Endothelial cell of umbilical vein (primary cell): ENCODE measurements at regions of chr6 and their contacts with region 1.

Region 1: DNA sequence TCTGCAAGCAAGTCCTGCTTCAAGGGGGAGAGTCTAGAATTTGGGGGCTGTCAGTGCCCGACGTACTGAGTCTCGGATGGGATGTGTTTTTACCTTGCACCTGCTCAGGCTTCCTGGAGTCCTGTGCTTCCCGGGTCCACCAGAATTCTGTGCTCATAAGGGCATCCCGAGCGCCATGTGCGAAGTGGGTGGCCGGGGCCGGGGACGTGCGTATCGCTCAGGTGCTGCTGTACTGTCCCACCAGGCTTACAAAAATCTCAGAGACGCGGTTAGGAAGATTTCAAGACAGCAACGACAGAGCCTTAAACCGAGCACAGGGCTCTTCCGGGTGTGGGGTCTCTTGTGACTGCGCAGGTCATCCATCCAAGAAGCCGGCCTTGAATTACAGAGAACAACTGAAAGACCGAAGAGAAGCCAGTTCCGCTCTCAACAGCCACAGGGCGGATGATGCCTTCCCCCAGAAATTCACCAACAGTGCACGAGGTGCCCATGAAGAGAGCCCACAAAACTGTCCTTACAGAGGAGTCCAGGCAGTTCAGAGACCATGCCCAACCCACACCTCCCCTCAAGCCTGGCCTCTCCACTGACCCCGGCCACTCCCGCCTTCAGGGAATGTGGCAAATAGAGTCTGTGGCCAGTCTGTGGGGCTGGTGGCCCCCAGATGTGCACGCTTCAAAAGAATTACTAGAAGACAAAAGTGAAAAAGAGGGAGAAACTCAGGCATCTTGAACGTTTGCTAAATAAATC is 104.7 kb downstream of the PXDC1 start:
- DNase-seq: no peak
- H3K4me3 ChIP-seq: no peak overlapping the region
- H3K27ac ChIP-seq: no peak overlapping the region
- H3K4me1 ChIP-seq: no peaks in the 10 kb centered on the region
- H3K27me3 ChIP-seq: peaks cover 0 to 2% of the 10 kb centered on the region in 2 experiments
- CTCF ChIP-seq: no peak
- POLR2A ChIP-seq: no peak

Region 2: GRCh38 chr6:3194535-3195419 is 452.0 kb before region 1 on chr6:
- CTCF ChIA-PET with region 1: no interaction called
- POLR2A ChIA-PET with region 1: no interaction called
- dilution Hi-C with region 1: no loop called
- intact Hi-C with region 1: no loop called
- DNase-seq: peak; percentile 74
- H3K4me3 ChIP-seq: no peak overlapping the region
- H3K27ac ChIP-seq: no peak overlapping the region
- H3K4me1 ChIP-seq: peaks cover 7% of the 10 kb centered on the region
- H3K27me3 ChIP-seq: peaks cover 0 to 2% of the 10 kb centered on the region in 2 experiments
- CTCF ChIP-seq: no peak
- POLR2A ChIP-seq: no peak

Region 3: DNA sequence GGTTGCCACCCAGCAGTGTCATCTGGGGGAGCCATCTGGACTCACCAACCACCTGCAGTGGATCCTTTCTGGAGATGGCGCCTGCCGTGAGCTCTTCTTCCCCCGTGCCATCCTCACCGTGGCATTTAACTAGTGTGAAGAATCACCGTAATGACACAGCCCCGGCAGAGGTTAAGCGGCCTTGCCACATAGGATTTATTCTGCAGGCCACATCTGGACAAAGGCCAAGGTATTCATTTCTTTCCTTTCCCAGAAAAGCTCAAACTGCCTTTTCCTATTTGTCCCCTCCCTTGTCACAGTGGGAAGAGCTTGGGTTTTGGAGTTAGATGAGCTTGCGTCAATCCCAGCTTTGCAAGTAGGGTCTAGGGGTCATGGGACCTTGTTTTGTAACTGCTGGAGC is 16.3 kb after region 1 on chr6:
- CTCF ChIA-PET with region 1: no interaction called
- POLR2A ChIA-PET with region 1: no interaction called
- dilution Hi-C with region 1: no loop called
- intact Hi-C with region 1: no loop called
- DNase-seq: no peak
- H3K4me3 ChIP-seq: no peak overlapping the region
- H3K27ac ChIP-seq: no peak overlapping the region
- H3K4me1 ChIP-seq: no peaks in the 10 kb centered on the region
- H3K27me3 ChIP-seq: peaks cover 2 to 13% of the 10 kb centered on the region in 2 experiments
- CTCF ChIP-seq: no peak
- POLR2A ChIP-seq: no peak

Region 4: GRCh38 chr6:3678946-3679345 is 32.2 kb after region 1 on chr6:
- CTCF ChIA-PET with region 1: no interaction called
- POLR2A ChIA-PET with region 1: no interaction called
- dilution Hi-C with region 1: no loop called
- intact Hi-C with region 1: loop called (anchors 1 kb)
- DNase-seq: no peak
- H3K4me3 ChIP-seq: no peak overlapping the region
- H3K27ac ChIP-seq: no peak overlapping the region
- H3K4me1 ChIP-seq: no peaks in the 10 kb centered on the region
- H3K27me3 ChIP-seq: no peaks in the 10 kb centered on the region
- CTCF ChIP-seq: no peak
- POLR2A ChIP-seq: no peak